ENCODE measurements at regions of chr12 and their contacts with region 1.

Region 1: DNA sequence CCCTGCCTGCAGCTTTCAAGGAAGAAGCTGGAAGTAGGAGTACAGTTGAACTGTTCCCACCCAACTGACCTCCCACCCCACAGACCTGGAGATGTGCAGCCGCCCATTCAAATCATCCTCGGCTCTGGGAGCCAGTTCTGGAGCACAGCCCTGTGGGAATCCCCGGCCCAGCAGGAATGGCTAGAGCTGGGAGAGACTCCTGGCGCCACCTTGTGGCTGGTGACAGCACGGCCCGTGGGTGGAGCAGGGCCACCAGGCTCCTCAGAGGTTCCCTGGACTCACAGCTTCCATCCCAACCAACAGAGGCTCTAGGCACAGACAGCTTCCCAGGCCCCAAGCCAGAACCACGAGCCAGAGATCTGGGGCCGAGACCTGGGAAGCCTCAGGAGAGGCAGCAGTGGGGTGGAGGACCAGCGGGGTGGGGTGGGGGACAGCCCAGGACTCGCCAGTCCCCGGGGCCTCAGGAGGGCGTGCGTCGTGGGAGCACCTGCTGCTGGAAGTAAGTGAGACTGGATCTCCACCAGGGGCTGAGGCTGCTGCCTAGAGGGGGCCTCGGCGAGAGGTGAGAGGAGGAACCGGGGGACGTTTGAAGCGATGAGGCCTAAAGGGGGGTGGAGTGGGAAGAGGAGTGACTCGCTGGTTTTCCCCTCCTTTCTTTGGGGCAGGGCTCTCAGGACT is 43.4 kb downstream of the RNF34 start:
- DNase-seq: peak; percentile 93
- CTCF ChIP-seq: peak; percentile 84

Region 2: GRCh38 chr12:120181991-120182631 is 1261.2 kb before region 1 on chr12:
- in situ Hi-C with region 1: no loop called
- DNase-seq: no peak
- CTCF ChIP-seq: no peak

Region 3: DNA sequence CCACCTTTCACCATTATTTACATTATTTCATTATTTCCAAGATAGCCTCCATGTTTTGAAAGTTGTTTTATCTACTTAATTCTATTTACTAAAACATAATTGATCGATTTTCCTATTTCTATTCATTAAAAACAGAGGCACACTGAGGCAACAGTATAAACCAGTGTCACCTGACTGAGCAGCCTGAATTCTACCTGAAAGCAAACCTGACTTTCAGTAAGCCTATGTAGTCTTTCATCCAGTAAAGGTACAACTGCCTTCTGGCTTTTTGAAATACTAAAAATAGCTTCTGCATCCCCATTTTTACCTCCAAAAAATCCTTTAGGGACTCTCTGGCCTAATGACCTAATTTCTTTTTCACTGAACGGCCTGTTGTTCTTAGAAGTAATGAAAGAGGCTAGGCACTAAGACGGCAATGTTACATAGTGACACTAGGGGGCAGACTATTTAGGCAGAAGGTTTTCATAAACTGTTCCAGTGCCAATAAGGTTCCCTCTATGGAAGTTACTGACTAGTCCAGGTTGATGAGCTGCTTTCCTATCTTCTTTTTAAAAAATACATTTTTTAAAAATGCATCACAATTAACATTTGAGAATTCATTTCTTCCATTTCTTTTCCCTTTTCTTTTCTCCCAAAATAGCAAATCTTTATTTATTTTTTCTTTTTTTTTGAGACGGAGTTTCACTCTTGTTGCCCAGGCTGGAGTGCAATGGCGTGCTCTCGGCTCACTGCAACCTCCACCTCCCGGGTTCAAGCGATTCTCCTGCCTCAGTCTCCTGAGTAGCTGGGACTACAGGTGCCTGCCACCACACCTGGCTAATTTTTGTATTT is 108.6 kb before region 1 on chr12:
- in situ Hi-C with region 1: loop called (anchors 25 kb)
- DNase-seq: peak; percentile 71
- CTCF ChIP-seq: peak; percentile 68

Region 4: DNA sequence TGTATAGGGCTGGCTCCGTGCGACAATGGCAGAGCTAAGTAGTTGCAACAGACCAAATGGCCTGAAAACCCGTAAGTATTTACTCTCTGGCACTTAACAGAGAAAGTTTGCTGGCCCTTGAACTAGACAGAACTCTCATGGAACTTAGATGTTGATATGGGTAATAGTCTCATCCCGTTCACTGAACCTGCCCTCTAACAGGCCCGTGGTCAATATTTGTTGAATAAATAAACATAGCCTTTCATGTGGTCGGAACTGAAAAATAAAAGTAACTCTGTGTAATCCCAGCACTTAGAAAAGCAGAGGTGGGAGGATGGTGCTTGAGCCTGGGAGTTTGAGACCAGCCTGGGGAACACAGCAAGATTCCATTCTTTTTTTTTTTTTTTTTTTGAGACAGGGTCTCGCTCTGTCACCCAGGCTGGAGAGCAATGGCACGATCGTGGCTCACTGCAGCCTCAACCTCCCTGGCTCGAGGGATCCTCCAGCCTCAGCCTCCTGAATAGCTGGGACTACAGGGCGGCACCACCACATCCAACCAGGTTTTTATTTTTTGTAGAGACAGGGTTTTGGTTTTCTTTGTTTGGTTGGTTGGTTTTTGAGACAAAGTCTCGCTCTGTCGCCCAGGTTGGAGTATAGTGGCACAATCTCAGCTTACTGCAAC is 107.8 kb after region 1 on chr12:
- in situ Hi-C with region 1: no loop called
- DNase-seq: no peak
- CTCF ChIP-seq: no peak

Measured in GM13976 (cell line).